ENCODE measurements at regions of chr12 and their contacts with region 1.

Region 1: DNA sequence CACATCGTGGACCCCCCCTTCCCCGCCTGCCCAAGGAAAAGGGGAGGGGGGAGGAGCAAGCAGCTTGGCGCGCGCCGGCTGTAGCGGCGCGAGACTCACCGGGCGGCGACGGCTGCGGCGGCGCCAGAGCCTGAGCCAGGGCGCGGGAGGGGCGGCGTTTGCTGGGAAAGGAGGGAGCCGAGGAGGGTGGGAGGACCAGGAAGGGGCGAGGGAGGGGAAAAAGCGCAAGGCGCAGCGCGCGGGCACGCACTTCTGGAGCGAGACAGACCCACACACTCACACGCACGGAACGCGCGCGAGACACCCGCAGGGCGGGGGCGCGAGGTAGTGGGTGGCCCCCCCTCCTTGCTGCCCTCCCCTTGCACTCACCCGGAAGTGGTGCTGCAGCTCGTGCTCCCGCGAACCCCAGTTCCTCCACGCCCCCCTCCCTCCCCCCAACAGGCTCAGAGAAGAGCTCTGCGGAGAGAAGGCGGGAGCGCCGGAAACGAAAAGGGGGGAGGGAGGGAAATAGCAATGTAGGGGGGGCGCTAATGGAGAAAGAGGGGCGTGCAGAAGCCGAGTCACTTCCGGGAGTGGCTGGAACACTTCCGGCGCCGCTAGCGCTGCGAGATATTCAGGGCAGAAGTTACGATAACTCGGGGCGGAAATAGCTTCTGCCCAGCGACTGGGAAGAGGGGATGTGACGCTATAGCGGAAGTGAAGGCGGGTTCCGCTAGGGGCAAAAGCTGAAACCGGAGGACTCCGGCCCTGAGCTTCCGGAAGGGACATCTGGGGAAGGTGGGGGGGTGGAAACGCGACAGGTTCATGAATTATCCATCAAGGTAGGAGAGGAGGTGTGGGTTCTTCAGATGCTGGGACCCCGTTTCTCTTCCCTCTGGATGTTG is at the start of gene ZNF384:
- DNase-seq: peak; percentile 99
- H3K4me3 ChIP-seq: peak within 1 kb of the TSS; percentile 94 to 98 (median 96)
- H3K27ac ChIP-seq: peak within 1 kb of the TSS; percentile 98 to 100 (median 100)
- H3K4me1 ChIP-seq: peaks cover 0 to 40% (median 36%) of the 10 kb centered on the region in 4 donors
- H3K27me3 ChIP-seq: no peaks in the 10 kb centered on the region
- CTCF ChIP-seq: peak in 2 of 4 experiments; percentile 22 to 35
- EP300 ChIP-seq: peak in 2 of 4 donors; percentile 8 to 40
- POLR2A ChIP-seq: peak; percentile 30 to 47
- total RNA-seq, gene ZNF384: 24.0 to 32.6 (median 28.7) TPM

Region 2: DNA sequence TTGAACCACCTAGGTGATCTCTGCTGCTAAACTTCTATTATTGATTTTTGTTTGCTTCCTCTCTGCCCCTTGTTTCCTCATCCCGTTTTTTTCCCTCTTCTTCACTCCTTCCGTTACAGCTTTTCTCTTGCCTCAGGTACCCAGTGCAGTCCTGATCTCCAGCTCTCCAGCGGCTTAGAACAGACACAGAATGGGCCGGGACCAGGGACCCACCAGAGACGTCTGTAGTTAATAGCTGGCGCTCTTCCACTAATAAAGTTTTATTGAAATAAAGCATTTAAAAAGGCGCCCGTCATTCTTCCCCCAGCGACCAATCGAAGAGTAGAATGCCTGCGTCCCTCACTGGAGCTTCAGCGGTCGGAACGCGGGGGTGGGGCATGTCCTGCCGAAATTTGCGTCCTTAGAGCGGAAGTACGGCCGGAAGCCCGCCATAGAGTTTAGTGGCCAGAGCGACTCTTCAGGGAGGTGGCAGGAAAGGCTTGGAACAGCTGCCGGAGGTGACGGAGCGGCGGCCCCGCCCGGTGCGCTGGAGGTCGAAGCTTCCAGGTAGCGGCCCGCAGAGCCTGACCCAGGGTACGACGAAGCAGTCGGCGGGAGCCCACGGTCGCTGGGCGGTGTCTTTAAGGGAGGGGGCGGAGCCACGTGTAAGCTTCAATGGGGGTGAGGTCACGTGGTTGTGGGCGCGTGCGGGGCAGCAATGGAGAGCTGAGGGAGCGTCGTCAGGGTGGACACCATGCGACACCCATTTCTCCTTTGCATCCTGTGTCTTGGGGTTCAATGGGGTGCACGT is 34.6 kb after region 1 on chr12 and contains the start of gene COPS7A:
- intact Hi-C with region 1: loop called (anchors 1 kb)
- DNase-seq: peak; percentile 99
- H3K4me3 ChIP-seq: peak within 1 kb of the TSS; percentile 52 to 67 (median 55)
- H3K27ac ChIP-seq: peak within 1 kb of the TSS; percentile 80 to 86 (median 84)
- H3K4me1 ChIP-seq: peaks cover 0 to 15% (median 14%) of the 10 kb centered on the region in 4 donors
- H3K27me3 ChIP-seq: no peaks in the 10 kb centered on the region
- CTCF ChIP-seq: no peak
- EP300 ChIP-seq: peak in 1 of 4 donors; percentile 19
- POLR2A ChIP-seq: peak; percentile 13 to 52
- total RNA-seq, gene COPS7A: 51.3 to 69.3 (median 60.1) TPM

Measured in sigmoid colon (tissue), 7 donors.